Naive thymus-derived CD4-positive, alpha-beta T cell (primary cell): ENCODE measurements at regions of chr5 and their contacts with region 1.

Region 1: GRCh38 chr5:131634996-131635754 is at the start of gene RAPGEF6:
- DNase-seq: peak; percentile 84 to 99 (median 97)
- ATAC-seq: peak; percentile 91
- H3K4me3 ChIP-seq: peak within 1 kb of the TSS; percentile 95
- H3K4me3 Mint-ChIP-seq: peak within 1 kb of the TSS in 5 of 10 donors; percentile 95 to 99 (median 97)
- H3K27ac ChIP-seq: peak within 1 kb of the TSS; percentile 98
- H3K27ac Mint-ChIP-seq: peak within 1 kb of the TSS; percentile 88 to 100 (median 99)
- H3K4me1 ChIP-seq: peaks cover 43 to 49% of the 10 kb centered on the region in 2 donors
- H3K4me1 Mint-ChIP-seq: peaks cover 16 to 44% (median 31%) of the 10 kb centered on the region in 7 donors
- H3K27me3 ChIP-seq: no peaks in the 10 kb centered on the region
- H3K27me3 Mint-ChIP-seq: peaks cover 0 to 3% (median 0%) of the 10 kb centered on the region in 5 donors
- total RNA-seq, gene RAPGEF6: 50.9 to 186 (median 114) TPM

Region 2: DNA sequence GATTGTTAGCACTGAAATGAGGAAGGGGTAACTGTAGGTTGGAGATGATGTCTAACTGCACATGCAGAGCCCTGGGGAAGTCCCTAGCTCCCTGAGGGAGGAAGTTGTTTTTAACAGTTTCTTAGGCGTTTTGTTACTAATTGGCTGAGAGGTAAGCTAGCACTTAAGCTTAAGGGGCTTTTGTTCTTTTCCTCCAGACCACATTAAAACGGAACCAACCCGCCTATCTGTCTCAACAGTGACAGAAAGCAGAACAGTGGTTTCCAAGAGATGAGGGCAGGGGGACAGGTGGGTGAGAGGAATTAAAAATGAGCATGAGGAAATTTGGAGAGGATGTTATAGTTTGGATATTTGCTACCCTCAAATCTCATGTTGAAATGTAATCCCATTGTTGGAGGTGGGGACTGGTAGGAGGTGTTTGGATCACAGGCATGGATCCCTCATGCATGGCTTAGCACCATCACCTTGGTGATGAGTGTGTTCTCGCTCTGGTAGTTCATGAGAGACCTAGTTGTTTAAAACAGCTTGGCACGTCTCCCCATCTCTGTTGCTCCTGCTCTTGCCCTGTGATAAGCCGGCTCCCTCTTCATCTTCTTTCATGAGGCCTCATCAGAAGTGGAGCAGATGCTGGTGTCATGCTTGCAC is 425.5 kb before region 1 on chr5:
- CTCF ChIA-PET with region 1: no interaction called
- POLR2A ChIA-PET with region 1: no interaction called
- intact Hi-C with region 1: no loop called
- DNase-seq: peak; percentile 11 to 91 (median 84)
- ATAC-seq: peak; percentile 98
- H3K4me3 ChIP-seq: peak overlapping the region; percentile 21
- H3K4me3 Mint-ChIP-seq: peak overlapping the region; percentile 72 to 90 (median 80)
- H3K27ac ChIP-seq: peak overlapping the region; percentile 77
- H3K27ac Mint-ChIP-seq: peak overlapping the region; percentile 91 to 98 (median 96)
- H3K4me1 ChIP-seq: peaks cover 18 to 37% of the 10 kb centered on the region in 2 donors
- H3K4me1 Mint-ChIP-seq: peaks cover 42 to 75% (median 61%) of the 10 kb centered on the region in 7 donors
- H3K27me3 ChIP-seq: no peaks in the 10 kb centered on the region
- H3K27me3 Mint-ChIP-seq: no peaks in the 10 kb centered on the region

Region 3: DNA sequence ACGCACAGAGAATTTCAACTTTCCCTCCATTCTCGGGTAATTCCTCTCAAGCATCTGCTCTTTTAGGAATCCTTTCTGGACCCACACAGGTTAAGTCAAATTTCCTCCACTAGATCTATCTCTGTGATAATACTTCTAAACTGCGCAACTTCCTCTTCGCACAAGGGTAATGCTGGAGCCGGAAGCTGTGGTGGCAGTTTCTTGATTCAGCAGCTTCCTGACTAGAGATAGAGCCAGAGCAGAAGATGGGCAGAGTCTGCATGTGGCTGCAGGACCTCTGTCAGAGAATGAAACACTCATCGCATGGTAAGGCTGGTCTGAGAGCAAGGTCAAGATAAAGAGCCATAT is 382.4 kb before region 1 on chr5:
- CTCF ChIA-PET with region 1: no interaction called
- POLR2A ChIA-PET with region 1: no interaction called
- intact Hi-C with region 1: loop called in 1 of 2 experiments (anchors 2 kb)
- DNase-seq: peak; percentile 41 to 90 (median 87)
- ATAC-seq: peak; percentile 93
- H3K4me3 ChIP-seq: peak overlapping the region; percentile 72
- H3K4me3 Mint-ChIP-seq: peak overlapping the region; percentile 80 to 97 (median 96)
- H3K27ac ChIP-seq: peak overlapping the region; percentile 78
- H3K27ac Mint-ChIP-seq: peak overlapping the region; percentile 91 to 97 (median 95)
- H3K4me1 ChIP-seq: peaks cover 51 to 54% of the 10 kb centered on the region in 2 donors
- H3K4me1 Mint-ChIP-seq: peaks cover 62 to 89% (median 67%) of the 10 kb centered on the region in 7 donors
- H3K27me3 ChIP-seq: no peaks in the 10 kb centered on the region
- H3K27me3 Mint-ChIP-seq: no peaks in the 10 kb centered on the region

Region 4: GRCh38 chr5:131536211-131536826 is 98.9 kb before region 1 on chr5:
- CTCF ChIA-PET with region 1: no interaction called
- POLR2A ChIA-PET with region 1: interaction called, 3 read pairs
- intact Hi-C with region 1: loop called (anchors 2 to 5 kb)
- DNase-seq: peak in 6 of 9 donors; percentile 33 to 61 (median 56)
- ATAC-seq: peak; percentile 65
- H3K4me3 ChIP-seq: peak overlapping the region; percentile 1
- H3K4me3 Mint-ChIP-seq: peak overlapping the region; percentile 63 to 82 (median 76)
- H3K27ac ChIP-seq: peak overlapping the region; percentile 72
- H3K27ac Mint-ChIP-seq: peak overlapping the region; percentile 73 to 93 (median 86)
- H3K4me1 ChIP-seq: peaks cover 27 to 69% of the 10 kb centered on the region in 2 donors
- H3K4me1 Mint-ChIP-seq: peaks cover 51 to 99% (median 86%) of the 10 kb centered on the region in 7 donors
- H3K27me3 ChIP-seq: no peaks in the 10 kb centered on the region
- H3K27me3 Mint-ChIP-seq: no peaks in the 10 kb centered on the region

Region 5: DNA sequence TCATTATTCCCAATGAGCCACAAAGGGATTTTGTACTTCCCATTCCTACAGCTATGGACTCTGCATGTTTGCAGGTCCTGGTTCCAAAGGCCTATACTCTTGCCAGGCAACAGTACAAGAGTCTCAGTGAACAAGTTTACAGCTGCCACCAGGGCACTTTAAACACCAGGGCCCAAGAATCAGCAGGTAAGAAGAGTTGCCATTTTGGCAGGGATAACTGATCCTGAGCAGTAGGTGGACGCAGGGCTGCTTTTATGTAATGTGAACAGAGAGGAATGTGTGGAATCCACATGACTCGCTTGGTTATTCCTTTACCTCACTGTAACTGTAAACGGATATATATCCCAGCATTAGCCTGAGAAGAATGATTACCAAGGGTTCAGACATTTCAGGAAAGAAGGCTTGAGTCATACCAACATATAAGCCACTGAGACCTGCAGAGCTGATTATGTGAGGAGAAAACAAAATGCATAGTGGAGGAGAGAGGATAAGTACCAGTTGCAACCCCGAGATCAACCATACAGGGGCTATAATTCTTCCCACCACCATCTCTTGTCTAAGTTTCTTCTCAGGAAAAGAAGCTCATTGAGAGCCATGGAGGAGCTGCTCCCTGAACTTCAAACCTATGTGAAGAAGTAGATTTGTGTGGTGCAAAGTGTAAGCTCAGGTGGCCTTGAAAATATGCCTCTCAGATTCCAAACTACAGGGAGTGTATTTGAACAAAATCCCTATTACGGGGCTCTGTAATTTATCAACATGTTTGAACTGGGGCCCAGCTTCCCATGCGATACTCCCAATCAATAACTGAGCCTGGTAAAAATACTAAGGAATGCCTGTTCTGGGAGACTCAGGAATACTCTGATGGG is 24.7 kb before region 1 on chr5:
- CTCF ChIA-PET with region 1: interaction called, 4 read pairs
- POLR2A ChIA-PET with region 1: interaction called, 9 read pairs
- intact Hi-C with region 1: loop called in 1 of 2 experiments (anchors 2 kb)
- DNase-seq: no peak
- ATAC-seq: no peak
- H3K4me3 ChIP-seq: no peak overlapping the region
- H3K4me3 Mint-ChIP-seq: peak overlapping the region in 1 of 10 donors; percentile 27
- H3K27ac ChIP-seq: no peak overlapping the region
- H3K27ac Mint-ChIP-seq: peak overlapping the region in 2 of 9 donors; percentile 31 to 39
- H3K4me1 ChIP-seq: peaks cover 0 to 4% of the 10 kb centered on the region in 2 donors
- H3K4me1 Mint-ChIP-seq: peaks cover 27 to 85% (median 73%) of the 10 kb centered on the region in 7 donors
- H3K27me3 ChIP-seq: no peaks in the 10 kb centered on the region
- H3K27me3 Mint-ChIP-seq: no peaks in the 10 kb centered on the region

Region 6: DNA sequence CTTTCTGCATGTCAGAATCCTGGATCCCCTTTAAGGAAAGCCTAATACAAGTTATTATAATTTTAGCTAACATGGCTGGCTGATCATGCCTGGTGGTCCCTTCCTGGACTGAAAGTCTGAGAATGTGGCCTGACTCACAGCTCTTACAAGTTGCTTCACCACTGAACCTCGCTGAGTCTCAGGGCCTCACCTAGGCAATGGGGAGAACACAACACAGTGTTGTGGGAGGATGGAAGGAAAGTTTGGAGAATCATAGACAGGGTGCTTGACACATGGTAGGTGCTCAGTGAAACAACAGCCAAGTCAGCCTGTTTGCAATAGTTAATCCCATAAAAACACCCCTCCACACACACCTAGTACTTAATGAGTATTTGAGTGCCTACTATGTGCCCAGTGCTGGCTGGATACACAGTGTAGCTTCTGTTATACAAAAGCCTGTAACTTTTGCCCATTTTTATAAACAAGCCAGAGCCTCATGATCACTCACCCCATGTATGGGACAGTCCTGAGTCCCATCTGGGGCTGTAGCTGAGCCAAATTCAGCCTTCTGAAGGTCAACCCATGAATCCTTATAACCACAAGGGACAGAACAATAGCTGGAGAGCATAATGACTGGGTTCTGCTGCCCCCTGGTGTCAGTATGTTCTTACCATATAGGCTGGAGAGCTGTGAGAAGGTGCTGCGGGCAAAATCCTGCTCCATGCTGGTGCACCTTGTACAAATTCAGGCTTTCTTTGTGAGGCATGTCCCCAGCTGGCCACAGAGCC is 372.4 kb after region 1 on chr5:
- CTCF ChIA-PET with region 1: no interaction called
- POLR2A ChIA-PET with region 1: interaction called, 4 read pairs
- intact Hi-C with region 1: loop called (anchors 1 to 2 kb)
- DNase-seq: peak; percentile 47 to 73 (median 64)
- ATAC-seq: peak; percentile 74
- H3K4me3 ChIP-seq: no peak overlapping the region
- H3K4me3 Mint-ChIP-seq: peak overlapping the region in 1 of 10 donors; percentile 3
- H3K27ac ChIP-seq: no peak overlapping the region
- H3K27ac Mint-ChIP-seq: peak overlapping the region in 2 of 9 donors; percentile 3 to 43
- H3K4me1 ChIP-seq: peaks cover 3 to 7% of the 10 kb centered on the region in 2 donors
- H3K4me1 Mint-ChIP-seq: peaks cover 19 to 39% (median 20%) of the 10 kb centered on the region in 7 donors
- H3K27me3 ChIP-seq: no peaks in the 10 kb centered on the region
- H3K27me3 Mint-ChIP-seq: peaks cover 4 to 47% (median 18%) of the 10 kb centered on the region in 5 donors

Region 7: DNA sequence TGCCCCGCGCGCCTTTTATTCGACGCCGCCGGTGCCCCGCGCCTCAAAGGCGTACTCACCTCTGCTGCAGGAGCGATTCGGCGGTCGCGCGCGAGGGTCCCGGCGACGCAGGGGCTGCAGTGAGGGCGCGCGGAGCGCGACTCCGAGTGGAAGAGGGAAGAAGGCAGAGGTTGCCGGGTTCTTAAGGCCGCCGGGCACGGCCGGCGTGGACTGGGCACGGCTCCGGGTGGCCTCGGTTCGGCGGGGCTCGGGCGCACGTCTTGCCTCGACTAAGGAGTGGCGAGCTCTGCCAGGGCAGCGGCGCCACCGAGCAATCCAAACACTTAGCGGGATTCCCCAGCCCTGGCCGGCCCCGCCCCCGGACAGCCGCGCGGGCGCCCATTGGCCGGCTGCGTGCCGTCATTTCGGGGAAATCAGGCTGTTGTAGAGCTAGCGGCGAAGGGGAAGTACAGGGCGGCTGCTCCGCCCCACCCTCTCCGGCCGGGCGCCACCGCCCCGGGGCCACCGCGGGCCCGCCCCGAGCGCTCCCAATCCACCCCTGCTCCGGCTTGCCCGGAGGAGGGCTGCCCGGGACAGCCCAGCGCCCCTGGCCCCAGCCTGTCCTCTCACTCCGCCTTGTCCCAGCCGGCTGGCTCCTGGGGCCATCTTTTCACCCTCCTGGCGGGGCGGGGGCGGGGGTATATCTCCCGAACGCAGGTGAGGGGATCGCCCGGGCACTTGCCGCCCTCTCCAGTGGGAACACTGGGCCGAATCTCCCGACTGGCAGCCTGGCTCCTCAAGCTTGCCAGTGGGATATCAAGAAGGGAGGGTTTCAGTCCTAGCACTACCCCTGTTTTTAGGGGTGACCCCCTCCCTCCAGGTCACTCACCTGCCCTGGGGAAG is 855.6 kb after region 1 on chr5 and contains the start of gene IRF1:
- CTCF ChIA-PET with region 1: no interaction called
- POLR2A ChIA-PET with region 1: no interaction called
- intact Hi-C with region 1: loop called in 1 of 2 experiments (anchors 10 kb)
- DNase-seq: peak; percentile 97 to 100 (median 99)
- ATAC-seq: peak; percentile 89
- H3K4me3 ChIP-seq: peak within 1 kb of the TSS; percentile 78
- H3K4me3 Mint-ChIP-seq: peak within 1 kb of the TSS; percentile 92 to 98 (median 95)
- H3K27ac ChIP-seq: peak within 1 kb of the TSS; percentile 99
- H3K27ac Mint-ChIP-seq: peak within 1 kb of the TSS; percentile 93 to 99 (median 96)
- H3K4me1 ChIP-seq: peaks cover 59 to 65% of the 10 kb centered on the region in 2 donors
- H3K4me1 Mint-ChIP-seq: peaks cover 52 to 78% (median 71%) of the 10 kb centered on the region in 7 donors
- H3K27me3 ChIP-seq: no peaks in the 10 kb centered on the region
- H3K27me3 Mint-ChIP-seq: peaks cover 0 to 2% (median 0%) of the 10 kb centered on the region in 5 donors
- total RNA-seq, gene IRF1: 118 to 632 (median 549) TPM

Region 8: DNA sequence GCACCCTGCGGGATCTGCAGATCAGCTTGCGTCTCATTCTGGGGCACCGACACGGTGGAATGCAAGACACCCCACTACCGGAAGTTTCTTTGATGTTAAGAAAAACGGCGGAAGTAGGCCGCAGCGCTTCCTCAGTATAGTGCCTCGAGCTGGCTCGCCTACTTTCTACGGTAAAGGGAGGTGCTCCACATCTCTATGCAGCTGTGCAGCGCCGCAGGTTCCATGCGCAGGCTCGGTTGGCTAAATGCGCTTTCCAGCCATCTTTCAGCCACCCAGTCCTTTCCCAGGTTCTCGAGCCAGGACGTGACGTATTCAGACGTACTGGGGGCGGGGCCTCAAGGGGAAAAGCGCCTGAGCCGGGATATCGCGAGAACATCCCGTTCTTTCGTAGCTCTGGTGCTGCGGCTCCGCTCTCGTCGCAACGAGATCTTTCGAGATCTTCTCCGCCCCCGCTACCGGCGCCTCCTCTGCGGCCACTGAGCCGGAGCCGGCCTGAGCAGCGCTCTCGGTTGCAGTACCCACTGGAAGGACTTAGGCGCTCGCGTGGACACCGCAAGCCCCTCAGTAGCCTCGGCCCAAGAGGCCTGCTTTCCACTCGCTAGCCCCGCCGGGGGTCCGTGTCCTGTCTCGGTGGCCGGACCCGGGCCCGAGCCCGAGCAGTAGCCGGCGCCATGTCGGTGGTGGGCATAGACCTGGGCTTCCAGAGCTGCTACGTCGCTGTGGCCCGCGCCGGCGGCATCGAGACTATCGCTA is 1416.6 kb after region 1 on chr5 and contains the start of gene HSPA4:
- CTCF ChIA-PET with region 1: no interaction called
- POLR2A ChIA-PET with region 1: no interaction called
- intact Hi-C with region 1: loop called in 1 of 2 experiments (anchors 5 kb)
- DNase-seq: peak; percentile 86 to 99 (median 98)
- ATAC-seq: peak; percentile 91
- H3K4me3 ChIP-seq: peak within 1 kb of the TSS; percentile 92
- H3K4me3 Mint-ChIP-seq: peak within 1 kb of the TSS; percentile 91 to 99 (median 98)
- H3K27ac ChIP-seq: peak within 1 kb of the TSS; percentile 98
- H3K27ac Mint-ChIP-seq: peak within 1 kb of the TSS; percentile 99 to 100 (median 100)
- H3K4me1 ChIP-seq: peaks cover 17 to 19% of the 10 kb centered on the region in 2 donors
- H3K4me1 Mint-ChIP-seq: peaks cover 31 to 70% (median 52%) of the 10 kb centered on the region in 7 donors
- H3K27me3 ChIP-seq: no peaks in the 10 kb centered on the region
- H3K27me3 Mint-ChIP-seq: no peaks in the 10 kb centered on the region
- total RNA-seq, gene HSPA4: 42.1 to 103 (median 50.0) TPM